AG04449 (cell line): ENCODE measurements at regions of chr1 and their contacts with region 1.

Region 1: GRCh38 chr1:151340870-151341754 is 5.9 kb downstream of the RFX5 start:
- DNase-seq: peak; percentile 45
- H3K4me3 ChIP-seq: no peak overlapping the region
- CTCF ChIP-seq: peak; percentile 46

Region 2: DNA sequence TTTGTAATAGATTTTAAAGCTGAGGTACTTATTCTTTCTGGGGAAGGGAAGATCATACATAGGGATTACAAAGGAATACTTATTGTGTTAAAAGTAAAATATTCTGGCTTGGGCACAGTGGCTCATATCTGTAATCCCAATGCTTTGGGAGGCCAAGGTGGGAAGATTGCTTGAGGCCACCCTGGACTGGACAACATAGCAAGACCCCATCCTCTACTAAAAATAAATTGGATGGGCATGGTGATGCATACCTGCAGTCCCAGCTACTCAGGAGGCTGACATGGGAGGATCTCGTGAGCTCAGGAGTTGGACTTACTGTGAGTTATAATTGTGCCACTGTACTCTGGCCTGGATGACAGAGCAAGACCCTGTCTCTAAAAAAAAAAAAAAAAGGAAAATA is 243.0 kb before region 1 on chr1:
- CTCF ChIA-PET with region 1: interaction called, 24 read pairs
- POLR2A ChIA-PET with region 1: no interaction called
- DNase-seq: no peak
- H3K4me3 ChIP-seq: no peak overlapping the region
- CTCF ChIP-seq: no peak

Region 3: GRCh38 chr1:151254217-151255213 is 86.6 kb before region 1 on chr1 and contains the start of gene PSMD4:
- CTCF ChIA-PET with region 1: interaction called, 14 read pairs
- POLR2A ChIA-PET with region 1: no interaction called
- DNase-seq: peak; percentile 81
- H3K4me3 ChIP-seq: peak within 1 kb of the TSS; percentile 80
- CTCF ChIP-seq: peak; percentile 7

Region 4: DNA sequence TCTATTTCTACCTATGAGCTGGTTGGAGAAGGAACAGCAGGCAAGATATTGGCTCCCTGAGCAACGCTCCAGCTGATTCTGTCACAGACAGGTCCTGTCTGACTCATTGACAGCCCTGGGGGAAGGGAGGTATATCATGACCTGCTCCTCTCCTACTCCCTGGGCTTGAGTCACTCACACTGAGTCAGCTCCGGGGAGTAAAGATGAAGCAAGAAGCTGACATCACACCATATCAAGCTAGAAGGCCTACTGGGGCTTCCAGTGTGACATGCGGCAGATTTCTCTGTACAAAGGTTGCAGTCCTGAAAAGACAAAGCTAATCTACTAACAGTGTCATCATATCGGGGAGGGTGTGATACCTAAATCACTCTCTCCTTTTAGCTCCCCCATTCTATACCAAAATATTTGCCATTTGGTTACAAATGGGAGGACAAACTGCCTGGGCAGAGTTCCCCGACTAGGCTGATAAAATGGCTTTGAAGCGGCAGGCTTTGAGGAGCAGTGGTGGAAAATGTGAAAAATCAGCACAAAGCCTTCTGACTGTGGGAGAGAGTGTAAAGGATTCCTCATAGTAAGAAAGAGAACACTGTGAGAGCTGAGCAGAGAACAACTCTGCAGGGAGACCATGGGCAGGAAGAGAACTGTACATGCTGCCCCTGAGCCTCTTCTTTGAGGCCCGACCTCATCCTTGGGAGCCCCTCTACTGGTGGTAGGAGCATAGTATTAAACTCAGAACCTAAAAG is 29.4 kb before region 1 on chr1:
- CTCF ChIA-PET with region 1: interaction called, 748 read pairs
- POLR2A ChIA-PET with region 1: interaction called, 3 read pairs
- DNase-seq: peak; percentile 95
- H3K4me3 ChIP-seq: no peak overlapping the region
- CTCF ChIP-seq: no peak

Region 5: GRCh38 chr1:151352006-151352689 is 11.0 kb after region 1 on chr1:
- CTCF ChIA-PET with region 1: interaction called, 52 read pairs
- POLR2A ChIA-PET with region 1: no interaction called
- DNase-seq: no peak
- H3K4me3 ChIP-seq: no peak overlapping the region
- CTCF ChIP-seq: no peak

Region 6: GRCh38 chr1:151372061-151372934 is 31.2 kb after region 1 on chr1 and contains the start of gene SELENBP1:
- CTCF ChIA-PET with region 1: interaction called, 10 read pairs
- POLR2A ChIA-PET with region 1: no interaction called
- DNase-seq: peak; percentile 12
- H3K4me3 ChIP-seq: peak within 1 kb of the TSS; percentile 56
- CTCF ChIP-seq: no peak

Region 7: DNA sequence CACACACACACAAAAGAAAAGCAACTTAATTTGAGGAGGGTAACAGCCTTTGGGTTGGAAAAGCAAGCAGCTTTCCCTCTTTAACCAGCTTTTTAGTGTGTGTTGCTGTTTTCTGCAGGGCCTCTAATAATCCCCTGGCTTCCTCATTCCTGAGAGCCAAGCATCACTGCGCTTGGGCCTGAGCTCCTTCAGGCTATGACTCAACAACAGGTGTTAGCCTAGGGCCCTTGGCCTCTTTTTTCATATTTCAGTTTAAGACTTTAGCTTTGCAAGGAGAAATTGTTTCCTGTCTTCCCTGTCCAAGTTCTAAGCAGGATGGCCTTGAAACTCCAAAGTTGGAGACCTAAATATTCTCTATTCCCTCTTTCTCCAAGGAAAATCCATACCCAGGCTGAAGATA is 244.5 kb after region 1 on chr1:
- CTCF ChIA-PET with region 1: no interaction called
- POLR2A ChIA-PET with region 1: no interaction called
- DNase-seq: no peak
- H3K4me3 ChIP-seq: no peak overlapping the region
- CTCF ChIP-seq: no peak